ENCODE measurements at regions of chr5 and their contacts with region 1.

Region 1: GRCh38 chr5:56270568-56271392 is 37.6 kb upstream of the ANKRD55 start:
- DNase-seq: peak; percentile 82
- ATAC-seq: peak; percentile 99
- H3K4me3 Mint-ChIP-seq: no peak overlapping the region
- H3K27ac Mint-ChIP-seq: peak overlapping the region; percentile 31
- H3K4me1 Mint-ChIP-seq: peaks cover 18% of the 10 kb centered on the region
- H3K27me3 Mint-ChIP-seq: peaks cover 3% of the 10 kb centered on the region
- CTCF ChIP-seq: peak; percentile 97

Region 2: GRCh38 chr5:55982957-55983381 is 287.8 kb before region 1 on chr5:
- CTCF ChIA-PET with region 1: no interaction called
- POLR2A ChIA-PET with region 1: no interaction called
- intact Hi-C with region 1: no loop called
- DNase-seq: peak; percentile 25
- ATAC-seq: peak; percentile 22
- H3K4me3 Mint-ChIP-seq: peak overlapping the region; percentile 4
- H3K27ac Mint-ChIP-seq: peak overlapping the region; percentile 17
- H3K4me1 Mint-ChIP-seq: peaks cover 63% of the 10 kb centered on the region
- H3K27me3 Mint-ChIP-seq: no peaks in the 10 kb centered on the region
- CTCF ChIP-seq: peak; percentile 34

Region 3: GRCh38 chr5:56037531-56038010 is 233.2 kb before region 1 on chr5:
- CTCF ChIA-PET with region 1: no interaction called
- POLR2A ChIA-PET with region 1: no interaction called
- intact Hi-C with region 1: no loop called
- DNase-seq: no peak
- ATAC-seq: no peak
- H3K4me3 Mint-ChIP-seq: no peak overlapping the region
- H3K27ac Mint-ChIP-seq: no peak overlapping the region
- H3K4me1 Mint-ChIP-seq: peaks cover 8% of the 10 kb centered on the region
- H3K27me3 Mint-ChIP-seq: no peaks in the 10 kb centered on the region
- CTCF ChIP-seq: no peak

Region 4: DNA sequence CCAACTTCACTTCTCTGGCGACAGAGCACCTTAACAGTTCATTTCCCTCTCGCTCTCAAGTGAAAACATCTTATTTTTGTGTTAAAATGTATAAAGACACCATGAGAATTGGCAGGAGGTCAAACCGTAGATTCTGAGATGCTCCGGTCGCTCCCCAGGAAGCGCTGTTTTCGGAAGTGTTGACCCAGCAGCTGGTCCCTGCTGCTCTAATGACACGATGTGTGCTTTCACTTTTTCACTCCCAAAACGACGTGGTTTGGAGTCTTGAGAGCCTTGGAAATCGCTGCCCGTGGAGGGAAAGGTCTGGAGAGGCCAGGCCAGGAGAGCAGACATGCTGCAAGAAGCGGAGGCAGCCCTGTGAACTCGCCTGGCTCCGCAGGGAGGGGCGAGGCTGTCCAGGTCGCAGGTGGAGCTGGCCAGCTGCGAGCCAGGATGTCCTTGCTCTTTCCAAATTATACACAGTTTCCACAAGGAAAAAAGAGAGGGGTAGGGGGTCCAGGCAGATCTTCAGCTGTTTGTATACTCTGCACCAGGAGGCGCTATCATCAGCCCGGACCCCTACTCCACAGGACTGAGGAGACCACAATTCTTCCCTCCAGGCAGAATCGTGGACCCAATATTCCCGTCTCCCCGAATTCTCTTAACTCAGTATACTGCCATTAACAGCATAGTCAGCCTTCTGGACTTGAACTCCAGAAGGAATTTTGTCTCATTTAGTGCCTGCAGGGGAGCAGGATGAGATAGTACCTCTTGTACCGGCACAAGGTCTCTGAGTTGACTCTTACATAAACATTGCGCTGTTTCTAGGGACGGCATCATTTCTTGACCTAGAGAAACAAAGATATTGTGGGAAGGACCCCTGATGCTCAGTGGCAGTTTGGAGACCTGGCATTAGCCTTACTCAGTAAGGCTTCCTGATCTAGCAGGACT is 210.9 kb after region 1 on chr5:
- CTCF ChIA-PET with region 1: interaction called, 11 read pairs
- POLR2A ChIA-PET with region 1: no interaction called
- intact Hi-C with region 1: no loop called
- DNase-seq: peak; percentile 16
- ATAC-seq: peak; percentile 37
- H3K4me3 Mint-ChIP-seq: peak overlapping the region; percentile 68
- H3K27ac Mint-ChIP-seq: peak overlapping the region; percentile 68
- H3K4me1 Mint-ChIP-seq: peaks cover 19% of the 10 kb centered on the region
- H3K27me3 Mint-ChIP-seq: peaks cover 4% of the 10 kb centered on the region
- CTCF ChIP-seq: peak; percentile 31

Region 5: GRCh38 chr5:56833325-56833724 is 562.5 kb after region 1 on chr5:
- CTCF ChIA-PET with region 1: interaction called, 88 read pairs
- POLR2A ChIA-PET with region 1: interaction called, 5 read pairs
- intact Hi-C with region 1: loop called (anchors 1 kb)
- DNase-seq: peak; percentile 27
- ATAC-seq: peak; percentile 46
- H3K4me3 Mint-ChIP-seq: no peak overlapping the region
- H3K27ac Mint-ChIP-seq: no peak overlapping the region
- H3K4me1 Mint-ChIP-seq: peaks cover 83% of the 10 kb centered on the region
- H3K27me3 Mint-ChIP-seq: no peaks in the 10 kb centered on the region
- CTCF ChIP-seq: no peak

Measured in activated CD8-positive, alpha-beta T cell treated with anti-CD3 and anti-CD28 coated beads for 36 hours (primary cell).